Mammary epithelial cell (primary cell): ENCODE measurements at regions of chr22 and their contacts with region 1.

Region 1: GRCh38 chr22:42990139-42990767 is 24.7 kb downstream of the PACSIN2 start:
- DNase-seq: peak; percentile 88
- H3K4me3 ChIP-seq: no peak overlapping the region
- H3K27ac ChIP-seq: no peak overlapping the region
- H3K4me1 ChIP-seq: peaks cover 46% of the 10 kb centered on the region
- H3K27me3 ChIP-seq: no peaks in the 10 kb centered on the region
- CTCF ChIP-seq: peak; percentile 41 to 69

Region 2: GRCh38 chr22:42939941-42940653 is 50.2 kb before region 1 on chr22:
- CTCF ChIA-PET with region 1: no interaction called
- dilution Hi-C with region 1: no loop called
- in situ Hi-C with region 1: no loop called
- intact Hi-C with region 1: loop called (anchors 2 kb)
- DNase-seq: peak; percentile 72
- H3K4me3 ChIP-seq: no peak overlapping the region
- H3K27ac ChIP-seq: peak overlapping the region; percentile 80
- H3K4me1 ChIP-seq: peaks cover 47% of the 10 kb centered on the region
- H3K27me3 ChIP-seq: no peaks in the 10 kb centered on the region
- CTCF ChIP-seq: no peak

Region 3: GRCh38 chr22:43007519-43008102 is 17.4 kb after region 1 on chr22:
- CTCF ChIA-PET with region 1: interaction called, 3 read pairs
- dilution Hi-C with region 1: no loop called
- in situ Hi-C with region 1: no loop called
- intact Hi-C with region 1: loop called (anchors 2 kb)
- DNase-seq: no peak
- H3K4me3 ChIP-seq: no peak overlapping the region
- H3K27ac ChIP-seq: no peak overlapping the region
- H3K4me1 ChIP-seq: peaks cover 48% of the 10 kb centered on the region
- H3K27me3 ChIP-seq: no peaks in the 10 kb centered on the region
- CTCF ChIP-seq: no peak